ENCODE measurements at regions of chr1 and their contacts with region 1.

Region 1: DNA sequence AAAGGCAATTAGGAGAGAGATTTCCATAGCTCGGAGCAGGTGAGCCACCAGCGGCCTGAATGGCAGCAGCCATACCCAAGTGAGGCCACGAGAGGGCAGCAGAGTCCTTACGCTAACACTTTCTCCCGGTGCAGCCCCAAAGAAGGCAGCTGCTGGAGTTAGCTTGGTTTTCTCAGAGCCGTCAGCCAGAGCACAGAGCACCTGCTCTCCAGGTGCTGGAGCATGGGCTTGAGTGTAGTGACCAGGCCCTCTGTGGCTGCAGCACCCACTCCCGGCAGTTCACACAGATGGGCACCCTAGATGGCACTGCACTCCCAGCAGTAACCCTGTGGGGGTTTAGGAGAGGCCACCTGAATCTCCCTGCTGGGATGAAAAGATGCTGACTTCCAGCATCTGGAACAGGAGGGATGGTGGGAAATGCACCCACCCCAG is 45.8 kb downstream of the TMCC2 start:
- DNase-seq: peak; percentile 92
- H3K4me3 Mint-ChIP-seq: no peak overlapping the region
- H3K27ac Mint-ChIP-seq: peak overlapping the region; percentile 82
- H3K4me1 Mint-ChIP-seq: peaks cover 38% of the 10 kb centered on the region
- H3K27me3 Mint-ChIP-seq: peaks cover 26% of the 10 kb centered on the region

Region 2: DNA sequence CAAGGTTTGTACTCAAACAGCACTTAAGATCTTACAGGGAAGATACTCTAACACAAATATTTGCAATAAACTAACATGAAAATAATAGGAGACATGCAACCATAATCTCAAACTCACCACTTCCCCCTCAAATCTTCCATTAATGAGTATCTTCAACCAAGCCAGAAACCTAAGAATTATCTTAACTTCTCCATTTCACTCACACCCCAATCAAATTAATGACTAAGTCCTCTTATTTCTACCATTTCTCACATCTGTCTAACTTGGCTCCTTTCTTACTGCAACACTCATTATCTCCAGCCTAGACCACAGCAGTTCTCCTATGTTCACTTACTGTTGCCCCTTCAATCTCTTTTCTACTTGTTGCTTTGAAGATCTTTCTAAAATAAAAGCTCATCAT is 162.2 kb before region 1 on chr1:
- CTCF ChIA-PET with region 1: no interaction called
- DNase-seq: no peak
- H3K4me3 Mint-ChIP-seq: no peak overlapping the region
- H3K27ac Mint-ChIP-seq: no peak overlapping the region
- H3K4me1 Mint-ChIP-seq: peaks cover 2% of the 10 kb centered on the region
- H3K27me3 Mint-ChIP-seq: no peaks in the 10 kb centered on the region

Region 3: GRCh38 chr1:205236526-205236925 is 37.0 kb before region 1 on chr1:
- CTCF ChIA-PET with region 1: no interaction called
- DNase-seq: no peak
- H3K4me3 Mint-ChIP-seq: no peak overlapping the region
- H3K27ac Mint-ChIP-seq: no peak overlapping the region
- H3K4me1 Mint-ChIP-seq: peaks cover 25% of the 10 kb centered on the region
- H3K27me3 Mint-ChIP-seq: peaks cover 14% of the 10 kb centered on the region

Region 4: GRCh38 chr1:205284343-205285144 is 11.0 kb after region 1 on chr1:
- CTCF ChIA-PET with region 1: interaction called, 98 read pairs
- DNase-seq: peak; percentile 96
- H3K4me3 Mint-ChIP-seq: peak overlapping the region; percentile 58
- H3K27ac Mint-ChIP-seq: peak overlapping the region; percentile 98
- H3K4me1 Mint-ChIP-seq: peaks cover 89% of the 10 kb centered on the region
- H3K27me3 Mint-ChIP-seq: peaks cover 43% of the 10 kb centered on the region

Region 5: DNA sequence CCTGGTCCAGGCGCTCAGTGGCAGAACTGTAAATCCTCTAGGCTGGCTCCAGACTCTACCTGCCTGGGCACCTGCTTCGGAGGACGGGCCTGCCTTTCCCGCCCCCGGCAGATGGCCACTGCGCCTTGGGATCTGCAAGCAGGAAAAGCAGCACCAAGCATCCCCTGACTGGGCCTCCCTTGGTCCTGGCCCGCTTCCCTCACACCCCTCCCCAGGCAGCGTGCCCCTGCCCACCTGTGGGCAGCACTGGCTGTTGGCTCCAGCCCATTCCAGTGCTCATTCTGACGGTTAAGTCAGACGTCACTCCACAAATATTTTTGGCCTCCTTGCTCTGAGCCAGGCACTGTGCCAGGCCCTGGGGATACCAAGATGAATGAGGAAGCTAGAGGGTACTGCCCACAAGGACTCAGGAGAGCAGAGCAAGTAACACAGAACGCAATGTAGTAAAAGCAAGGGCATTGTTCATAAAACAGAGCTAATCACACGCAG is 204.2 kb after region 1 on chr1:
- CTCF ChIA-PET with region 1: no interaction called
- DNase-seq: no peak
- H3K4me3 Mint-ChIP-seq: no peak overlapping the region
- H3K27ac Mint-ChIP-seq: no peak overlapping the region
- H3K4me1 Mint-ChIP-seq: peaks cover 19% of the 10 kb centered on the region
- H3K27me3 Mint-ChIP-seq: peaks cover 53% of the 10 kb centered on the region

Region 6: DNA sequence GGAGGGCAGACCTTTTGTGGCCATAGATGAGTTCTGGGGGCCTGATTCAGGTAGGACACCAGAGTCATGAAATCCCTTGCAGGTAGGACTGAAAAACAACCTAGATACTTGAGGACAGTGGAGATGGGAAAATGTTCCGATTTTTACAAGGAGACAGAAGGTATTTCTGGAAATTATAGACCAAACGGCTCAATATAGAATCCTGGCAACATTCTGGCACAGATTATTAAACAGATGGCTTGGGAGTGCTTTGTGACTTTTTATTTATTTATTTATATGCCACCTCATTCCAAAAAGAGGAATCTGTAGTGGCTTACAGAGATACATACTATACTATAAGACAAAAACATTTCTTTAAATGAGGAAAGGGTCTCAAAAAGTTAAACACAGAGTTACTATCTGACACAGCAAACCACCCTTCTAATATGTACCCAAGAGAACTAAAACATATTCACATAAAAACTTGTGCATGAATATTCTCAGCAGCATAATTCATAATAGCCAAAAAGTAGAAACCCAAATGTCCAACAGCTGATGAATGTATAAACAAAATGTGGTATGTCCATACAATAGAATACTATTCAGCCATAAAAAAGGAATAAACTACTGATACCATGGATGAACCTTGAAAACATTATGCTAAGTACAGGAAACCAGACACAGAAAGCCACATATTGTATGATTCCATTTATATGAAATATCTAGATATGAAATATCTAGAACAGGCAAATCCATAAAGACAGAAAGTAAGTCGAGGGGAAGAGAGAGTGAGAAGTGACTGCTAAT is 280.7 kb after region 1 on chr1:
- CTCF ChIA-PET with region 1: no interaction called
- DNase-seq: no peak
- H3K4me3 Mint-ChIP-seq: no peak overlapping the region
- H3K27ac Mint-ChIP-seq: no peak overlapping the region
- H3K4me1 Mint-ChIP-seq: no peaks in the 10 kb centered on the region
- H3K27me3 Mint-ChIP-seq: peaks cover 58% of the 10 kb centered on the region